IMR-90 (cell line): ENCODE measurements at regions of chr4 and their contacts with region 1.

Region 1: GRCh38 chr4:119314356-119314755 is 7.6 kb downstream of the FABP2 start:
- DNase-seq: peak; percentile 59
- ATAC-seq: peak; percentile 86
- H3K4me3 ChIP-seq: no peak overlapping the region
- H3K27ac ChIP-seq: no peak overlapping the region
- H3K4me1 ChIP-seq: no peaks in the 10 kb centered on the region
- H3K27me3 ChIP-seq: no peaks in the 10 kb centered on the region
- CTCF ChIP-seq: peak; percentile 63
- POLR2A ChIP-seq: no peak
- RAD21 ChIP-seq: peak; percentile 72

Region 2: DNA sequence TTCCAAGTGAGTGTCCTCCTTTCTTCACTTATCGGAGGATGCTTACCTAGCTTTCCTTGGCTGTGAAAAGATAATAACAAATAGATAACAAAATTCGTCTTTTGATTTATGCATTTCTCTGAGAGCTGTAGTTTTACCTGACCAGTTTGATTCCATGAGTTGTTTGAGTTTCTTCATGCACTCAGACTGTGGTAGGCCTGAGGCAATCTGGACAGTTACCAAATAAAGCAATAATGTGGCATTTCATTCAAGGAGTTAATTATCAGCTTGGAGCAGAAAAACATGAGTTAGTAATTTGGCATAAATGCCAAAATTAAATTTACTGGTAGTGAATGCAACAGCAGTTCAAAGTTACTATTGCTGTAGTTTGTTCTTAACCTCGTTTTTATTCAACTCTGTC is 45.9 kb before region 1 on chr4:
- CTCF ChIA-PET with region 1: no interaction called
- POLR2A ChIA-PET with region 1: no interaction called
- dilution Hi-C with region 1: no loop called
- in situ Hi-C with region 1: no loop called
- intact Hi-C with region 1: no loop called
- DNase-seq: no peak
- ATAC-seq: no peak
- H3K4me3 ChIP-seq: no peak overlapping the region
- H3K27ac ChIP-seq: no peak overlapping the region
- H3K4me1 ChIP-seq: no peaks in the 10 kb centered on the region
- H3K27me3 ChIP-seq: no peaks in the 10 kb centered on the region
- CTCF ChIP-seq: no peak
- POLR2A ChIP-seq: no peak
- RAD21 ChIP-seq: no peak

Region 3: GRCh38 chr4:119490335-119490734 is 176.0 kb after region 1 on chr4:
- CTCF ChIA-PET with region 1: no interaction called
- POLR2A ChIA-PET with region 1: no interaction called
- dilution Hi-C with region 1: no loop called
- in situ Hi-C with region 1: loop called (anchors 10 kb)
- intact Hi-C with region 1: loop called (anchors 1 kb)
- DNase-seq: peak; percentile 69
- ATAC-seq: peak; percentile 45
- H3K4me3 ChIP-seq: no peak overlapping the region
- H3K27ac ChIP-seq: no peak overlapping the region
- H3K4me1 ChIP-seq: no peaks in the 10 kb centered on the region
- H3K27me3 ChIP-seq: no peaks in the 10 kb centered on the region
- CTCF ChIP-seq: peak; percentile 43
- POLR2A ChIP-seq: no peak; the same call in 1 of the 2 replicates
- RAD21 ChIP-seq: peak; percentile 38

Region 4: GRCh38 chr4:121096629-121097028 is 1782.3 kb after region 1 on chr4:
- CTCF ChIA-PET with region 1: no interaction called
- POLR2A ChIA-PET with region 1: no interaction called
- dilution Hi-C with region 1: no loop called
- in situ Hi-C with region 1: no loop called
- intact Hi-C with region 1: loop called (anchors 10 kb)
- DNase-seq: peak; percentile 52
- ATAC-seq: 0 out of 2 replicates have a peak, but pooled peaks have one; percentile 29
- H3K4me3 ChIP-seq: no peak overlapping the region
- H3K27ac ChIP-seq: no peak overlapping the region
- H3K4me1 ChIP-seq: no peaks in the 10 kb centered on the region
- H3K27me3 ChIP-seq: peaks cover 2% of the 10 kb centered on the region; the same call in 1 of the 2 replicates
- CTCF ChIP-seq: peak; percentile 73
- POLR2A ChIP-seq: no peak
- RAD21 ChIP-seq: peak; percentile 72